ENCODE measurements at regions of chr1 and their contacts with region 1.

Region 1: GRCh38 chr1:97265630-97266029 is 544.0 kb downstream of the PTBP2 start:
- DNase-seq: no peak
- H3K4me3 Mint-ChIP-seq: no peak overlapping the region
- H3K27ac Mint-ChIP-seq: no peak overlapping the region
- H3K4me1 Mint-ChIP-seq: no peaks in the 10 kb centered on the region
- H3K27me3 Mint-ChIP-seq: no peaks in the 10 kb centered on the region

Region 2: DNA sequence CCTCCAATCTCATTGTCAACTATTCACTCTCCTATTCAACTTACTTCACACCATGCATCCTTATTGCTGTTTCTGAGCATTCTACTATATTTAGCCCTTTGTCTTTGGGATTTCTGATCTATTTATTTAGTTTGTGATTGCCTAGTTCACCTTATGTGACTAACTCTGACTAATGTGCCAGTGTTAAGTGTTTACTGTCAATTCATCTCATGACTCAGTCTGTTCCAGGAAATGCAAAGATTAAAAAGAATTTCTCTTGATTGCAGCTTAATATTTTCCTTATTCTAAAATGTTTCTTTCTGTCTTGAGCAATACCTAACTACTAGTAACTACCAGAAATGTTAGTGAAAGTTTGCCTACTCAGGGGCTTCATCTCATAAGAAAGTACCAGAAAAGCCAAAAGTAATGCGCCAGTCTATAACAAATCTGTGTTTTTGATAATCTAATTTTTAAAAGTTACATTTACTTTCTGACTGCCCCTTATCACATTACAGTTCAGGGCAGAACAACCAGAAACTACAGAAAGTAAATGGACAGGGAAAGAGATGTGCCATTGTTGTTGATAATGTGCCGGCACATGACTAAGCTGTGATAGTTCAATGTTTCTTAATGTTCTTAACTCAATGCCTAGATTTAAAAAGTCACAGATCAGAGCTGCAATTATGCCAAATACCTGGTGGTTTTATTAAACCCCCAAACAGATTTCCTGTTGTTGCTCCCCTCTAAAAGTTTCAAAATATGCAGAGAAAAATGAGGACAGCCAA is 12.4 kb after region 1 on chr1:
- CTCF ChIA-PET with region 1: no interaction called
- POLR2A ChIA-PET with region 1: no interaction called
- intact Hi-C with region 1: loop called (anchors 2 kb)
- DNase-seq: no peak
- H3K4me3 Mint-ChIP-seq: no peak overlapping the region
- H3K27ac Mint-ChIP-seq: no peak overlapping the region
- H3K4me1 Mint-ChIP-seq: peaks cover 8% of the 10 kb centered on the region
- H3K27me3 Mint-ChIP-seq: no peaks in the 10 kb centered on the region

Measured in activated CD4-positive, alpha-beta memory T cell treated with anti-CD3 and anti-CD28 coated beads for 36 hours (primary cell).